Body of pancreas (tissue), 4 donors: ENCODE measurements at regions of chr14 and their contacts with region 1.

Region 1: GRCh38 chr14:37903343-37904191 is 304.1 kb upstream of the SSTR1 start:
- DNase-seq: peak in 3 of 4 donors; percentile 18 to 33 (median 29)
- ATAC-seq: peak; percentile 81
- H3K4me3 ChIP-seq: no peak overlapping the region
- H3K27ac ChIP-seq: no peak overlapping the region
- H3K4me1 ChIP-seq: peaks cover 7% of the 10 kb centered on the region
- H3K27me3 ChIP-seq: no peaks in the 10 kb centered on the region
- CTCF ChIP-seq: peak; percentile 42 to 77 (median 73)
- POLR2A ChIP-seq: no peak

Region 2: DNA sequence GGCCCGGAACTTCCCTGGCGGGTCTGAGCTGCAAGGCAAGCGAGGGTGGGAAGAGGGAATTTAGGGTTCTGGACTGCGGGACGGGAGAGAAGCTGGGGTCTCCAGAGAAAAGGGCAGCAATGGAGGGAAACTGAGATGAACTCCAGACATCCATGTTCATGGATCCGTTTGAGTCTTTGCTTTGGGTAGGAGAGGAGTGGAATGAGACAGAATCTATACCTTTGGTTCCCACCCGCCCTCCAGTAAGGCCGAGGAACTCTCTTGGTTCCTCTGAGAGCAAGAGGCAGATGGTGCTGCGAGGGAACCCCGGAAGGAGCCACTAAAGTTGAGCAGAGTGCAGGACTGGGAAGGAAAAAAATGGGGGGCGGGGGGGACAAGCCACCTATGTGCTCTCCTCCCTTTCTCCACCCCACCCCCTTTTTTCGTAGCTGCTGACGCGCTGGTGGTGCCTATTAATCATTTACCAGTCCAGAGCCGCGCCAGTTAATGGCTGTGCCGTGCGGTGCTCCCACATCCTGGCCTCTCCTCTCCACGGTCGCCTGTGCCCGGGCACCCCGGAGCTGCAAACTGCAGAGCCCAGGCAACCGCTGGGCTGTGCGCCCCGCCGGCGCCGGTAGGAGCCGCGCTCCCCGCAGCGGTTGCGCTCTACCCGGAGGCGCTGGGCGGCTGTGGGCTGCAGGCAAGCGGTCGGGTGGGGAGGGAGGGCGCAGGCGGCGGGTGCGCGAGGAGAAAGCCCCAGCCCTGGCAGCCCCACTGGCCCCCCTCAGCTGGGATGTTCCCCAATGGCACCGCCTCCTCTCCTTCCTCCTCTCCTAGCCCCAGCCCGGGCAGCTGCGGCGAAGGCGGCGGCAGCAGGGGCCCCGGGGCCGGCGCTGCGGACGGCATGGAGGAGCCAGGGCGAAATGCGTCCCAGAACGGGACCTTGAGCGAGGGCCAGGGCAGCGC is 305.3 kb after region 1 on chr14:
- intact Hi-C with region 1: loop called (anchors 10 kb)
- DNase-seq: peak; percentile 73 to 86 (median 81)
- ATAC-seq: peak; percentile 82
- H3K4me3 ChIP-seq: peak overlapping the region; percentile 45 to 56
- H3K27ac ChIP-seq: peak overlapping the region in 3 of 4 donors; percentile 71 to 86 (median 75)
- H3K4me1 ChIP-seq: peaks cover 46% of the 10 kb centered on the region
- H3K27me3 ChIP-seq: no peaks in the 10 kb centered on the region
- CTCF ChIP-seq: peak in 5 of 7 experiments; percentile 28 to 56 (median 32)
- POLR2A ChIP-seq: peak; percentile 24 to 75 (median 55)

Region 3: DNA sequence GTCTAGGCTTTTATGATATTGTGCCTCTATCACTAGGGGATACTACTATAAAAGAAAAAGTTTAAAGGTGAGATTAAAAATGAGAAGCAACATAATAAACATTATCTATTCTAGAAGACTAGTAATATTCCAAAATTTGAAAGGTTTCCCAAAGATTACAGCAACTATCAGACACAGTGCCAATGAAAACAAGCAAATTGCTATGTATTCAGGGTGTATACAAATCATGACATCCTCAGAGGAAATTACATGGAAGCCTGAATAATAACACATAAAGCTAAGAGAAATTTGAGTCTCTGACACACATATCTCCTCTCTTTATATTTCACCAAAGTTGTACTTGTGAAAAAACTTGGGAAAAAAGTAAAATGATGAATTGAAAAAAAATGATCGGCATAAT is 872.4 kb after region 1 on chr14:
- intact Hi-C with region 1: no loop called
- DNase-seq: no peak
- ATAC-seq: no peak
- H3K4me3 ChIP-seq: no peak overlapping the region
- H3K27ac ChIP-seq: no peak overlapping the region
- H3K4me1 ChIP-seq: no peaks in the 10 kb centered on the region
- H3K27me3 ChIP-seq: no peaks in the 10 kb centered on the region
- CTCF ChIP-seq: no peak
- POLR2A ChIP-seq: no peak